MCF 10A (cell line): ENCODE measurements at regions of chr5 and their contacts with region 1.

Region 1: GRCh38 chr5:138449501-138450239 is 10.8 kb downstream of the REEP2 start:
- DNase-seq: peak; percentile 95
- H3K4me3 Mint-ChIP-seq: no peak overlapping the region
- H3K27ac Mint-ChIP-seq: no peak overlapping the region
- H3K4me1 Mint-ChIP-seq: peaks cover 7% of the 10 kb centered on the region
- H3K27me3 Mint-ChIP-seq: no peaks in the 10 kb centered on the region
- CTCF ChIP-seq: peak; percentile 98

Region 2: GRCh38 chr5:138115254-138115653 is 334.4 kb before region 1 on chr5:
- CTCF ChIA-PET with region 1: no interaction called
- POLR2A ChIA-PET with region 1: no interaction called
- intact Hi-C with region 1: no loop called
- DNase-seq: no peak
- H3K4me3 Mint-ChIP-seq: no peak overlapping the region
- H3K27ac Mint-ChIP-seq: no peak overlapping the region
- H3K4me1 Mint-ChIP-seq: peaks cover 5% of the 10 kb centered on the region
- H3K27me3 Mint-ChIP-seq: peaks cover 20% of the 10 kb centered on the region
- CTCF ChIP-seq: no peak

Region 3: GRCh38 chr5:138408023-138408422 is 41.6 kb before region 1 on chr5:
- CTCF ChIA-PET with region 1: interaction called, 21 read pairs
- POLR2A ChIA-PET with region 1: no interaction called
- intact Hi-C with region 1: no loop called
- DNase-seq: no peak
- H3K4me3 Mint-ChIP-seq: no peak overlapping the region
- H3K27ac Mint-ChIP-seq: no peak overlapping the region
- H3K4me1 Mint-ChIP-seq: peaks cover 5% of the 10 kb centered on the region
- H3K27me3 Mint-ChIP-seq: no peaks in the 10 kb centered on the region
- CTCF ChIP-seq: no peak

Region 4: GRCh38 chr5:138425079-138425478 is 24.6 kb before region 1 on chr5:
- CTCF ChIA-PET with region 1: interaction called, 17 read pairs
- POLR2A ChIA-PET with region 1: no interaction called
- intact Hi-C with region 1: no loop called
- DNase-seq: no peak
- H3K4me3 Mint-ChIP-seq: no peak overlapping the region
- H3K27ac Mint-ChIP-seq: no peak overlapping the region
- H3K4me1 Mint-ChIP-seq: peaks cover 6% of the 10 kb centered on the region
- H3K27me3 Mint-ChIP-seq: no peaks in the 10 kb centered on the region
- CTCF ChIP-seq: no peak

Region 5: GRCh38 chr5:138464008-138464387 is 14.3 kb after region 1 on chr5:
- CTCF ChIA-PET with region 1: interaction called, 187 read pairs
- POLR2A ChIA-PET with region 1: interaction called, 42 read pairs
- intact Hi-C with region 1: no loop called
- DNase-seq: peak; percentile 98
- H3K4me3 Mint-ChIP-seq: peak overlapping the region; percentile 78
- H3K27ac Mint-ChIP-seq: peak overlapping the region; percentile 93
- H3K4me1 Mint-ChIP-seq: peaks cover 45% of the 10 kb centered on the region
- H3K27me3 Mint-ChIP-seq: peaks cover 20% of the 10 kb centered on the region
- CTCF ChIP-seq: peak; percentile 97

Region 6: GRCh38 chr5:138508963-138509362 is 59.3 kb after region 1 on chr5:
- CTCF ChIA-PET with region 1: interaction called, 278 read pairs
- POLR2A ChIA-PET with region 1: interaction called, 25 read pairs
- intact Hi-C with region 1: no loop called
- DNase-seq: no peak
- H3K4me3 Mint-ChIP-seq: no peak overlapping the region
- H3K27ac Mint-ChIP-seq: peak overlapping the region; percentile 80
- H3K4me1 Mint-ChIP-seq: peaks cover 41% of the 10 kb centered on the region
- H3K27me3 Mint-ChIP-seq: no peaks in the 10 kb centered on the region
- CTCF ChIP-seq: no peak

Region 7: DNA sequence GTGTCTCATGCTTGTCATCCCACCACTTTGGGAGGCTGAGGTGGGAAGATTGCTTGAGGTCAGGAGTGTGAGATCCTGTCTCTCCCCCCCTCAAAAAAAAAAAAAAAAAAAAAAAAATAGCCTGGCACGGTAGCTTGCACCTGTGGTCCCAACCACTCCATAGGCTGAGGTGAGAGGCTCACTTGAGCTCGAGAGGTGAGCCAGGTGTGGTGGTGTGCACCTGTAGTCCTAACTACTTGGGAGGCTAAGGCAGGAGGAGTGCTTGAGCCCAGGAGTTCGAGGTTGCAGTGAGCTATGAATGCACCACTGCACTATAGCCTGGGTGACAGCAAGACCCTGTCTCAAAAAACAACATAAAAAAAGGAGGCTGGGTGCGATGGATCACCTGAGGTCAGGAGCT is 103.0 kb after region 1 on chr5:
- CTCF ChIA-PET with region 1: interaction called, 179 read pairs
- POLR2A ChIA-PET with region 1: interaction called, 29 read pairs
- intact Hi-C with region 1: loop called (anchors 1 kb)
- DNase-seq: no peak
- H3K4me3 Mint-ChIP-seq: no peak overlapping the region
- H3K27ac Mint-ChIP-seq: no peak overlapping the region
- H3K4me1 Mint-ChIP-seq: peaks cover 10% of the 10 kb centered on the region
- H3K27me3 Mint-ChIP-seq: no peaks in the 10 kb centered on the region
- CTCF ChIP-seq: no peak

Region 8: GRCh38 chr5:138686668-138687067 is 237.0 kb after region 1 on chr5:
- CTCF ChIA-PET with region 1: no interaction called
- POLR2A ChIA-PET with region 1: no interaction called
- intact Hi-C with region 1: no loop called
- DNase-seq: peak; percentile 77
- H3K4me3 Mint-ChIP-seq: no peak overlapping the region
- H3K27ac Mint-ChIP-seq: no peak overlapping the region
- H3K4me1 Mint-ChIP-seq: peaks cover 7% of the 10 kb centered on the region
- H3K27me3 Mint-ChIP-seq: peaks cover 16% of the 10 kb centered on the region
- CTCF ChIP-seq: no peak